Right lobe of liver (tissue), 6 donors: ENCODE measurements at regions of chr9 and their contacts with region 1.

Region 1: GRCh38 chr9:95127249-95128176 is 190.0 kb downstream of the FANCC start:
- DNase-seq: peak; percentile 75 to 86 (median 86)
- ATAC-seq: peak; percentile 81 to 88 (median 86)
- H3K4me3 ChIP-seq: peak overlapping the region in 1 of 3 donors; percentile 10
- H3K27ac ChIP-seq: no peak overlapping the region
- H3K4me1 ChIP-seq: peaks cover 0 to 22% (median 9%) of the 10 kb centered on the region in 4 donors
- H3K27me3 ChIP-seq: no peaks in the 10 kb centered on the region
- CTCF ChIP-seq: peak; percentile 82 to 100 (median 97)
- POLR2A ChIP-seq: no peak

Region 2: GRCh38 chr9:94672811-94673487 is 454.6 kb before region 1 on chr9:
- intact Hi-C with region 1: loop called in 1 of 2 experiments (anchors 10 kb)
- DNase-seq: no peak
- ATAC-seq: no peak
- H3K4me3 ChIP-seq: no peak overlapping the region
- H3K27ac ChIP-seq: no peak overlapping the region
- H3K4me1 ChIP-seq: peaks cover 0 to 8% (median 0%) of the 10 kb centered on the region in 4 donors
- H3K27me3 ChIP-seq: no peaks in the 10 kb centered on the region
- CTCF ChIP-seq: no peak
- POLR2A ChIP-seq: no peak

Region 3: GRCh38 chr9:94772639-94773303 is 354.7 kb before region 1 on chr9:
- intact Hi-C with region 1: loop called in 1 of 2 experiments (anchors 10 kb)
- DNase-seq: no peak
- ATAC-seq: no peak
- H3K4me3 ChIP-seq: no peak overlapping the region
- H3K27ac ChIP-seq: no peak overlapping the region
- H3K4me1 ChIP-seq: peaks cover 0 to 5% (median 0%) of the 10 kb centered on the region in 4 donors
- H3K27me3 ChIP-seq: no peaks in the 10 kb centered on the region
- CTCF ChIP-seq: no peak
- POLR2A ChIP-seq: no peak